ENCODE measurements at regions of chr10 and their contacts with region 1.

Region 1: GRCh38 chr10:128069351-128070051 is 56.7 kb downstream of the MKI67 start:
- DNase-seq: peak in 3 of 4 donors; percentile 68 to 88 (median 83)
- ATAC-seq: peak; percentile 80
- H3K4me3 ChIP-seq: no peak overlapping the region
- H3K27ac ChIP-seq: no peak overlapping the region
- H3K4me1 ChIP-seq: peaks cover 4 to 34% of the 10 kb centered on the region in 2 donors
- H3K27me3 ChIP-seq: no peaks in the 10 kb centered on the region
- CTCF ChIP-seq: peak; percentile 78 to 79

Region 2: GRCh38 chr10:127863231-127863825 is 206.2 kb before region 1 on chr10:
- intact Hi-C with region 1: loop called in 1 of 2 experiments (anchors 5 kb)
- DNase-seq: no peak
- ATAC-seq: no peak
- H3K4me3 ChIP-seq: no peak overlapping the region
- H3K27ac ChIP-seq: no peak overlapping the region
- H3K4me1 ChIP-seq: no peaks in the 10 kb centered on the region
- H3K27me3 ChIP-seq: no peaks in the 10 kb centered on the region
- CTCF ChIP-seq: no peak

Region 3: DNA sequence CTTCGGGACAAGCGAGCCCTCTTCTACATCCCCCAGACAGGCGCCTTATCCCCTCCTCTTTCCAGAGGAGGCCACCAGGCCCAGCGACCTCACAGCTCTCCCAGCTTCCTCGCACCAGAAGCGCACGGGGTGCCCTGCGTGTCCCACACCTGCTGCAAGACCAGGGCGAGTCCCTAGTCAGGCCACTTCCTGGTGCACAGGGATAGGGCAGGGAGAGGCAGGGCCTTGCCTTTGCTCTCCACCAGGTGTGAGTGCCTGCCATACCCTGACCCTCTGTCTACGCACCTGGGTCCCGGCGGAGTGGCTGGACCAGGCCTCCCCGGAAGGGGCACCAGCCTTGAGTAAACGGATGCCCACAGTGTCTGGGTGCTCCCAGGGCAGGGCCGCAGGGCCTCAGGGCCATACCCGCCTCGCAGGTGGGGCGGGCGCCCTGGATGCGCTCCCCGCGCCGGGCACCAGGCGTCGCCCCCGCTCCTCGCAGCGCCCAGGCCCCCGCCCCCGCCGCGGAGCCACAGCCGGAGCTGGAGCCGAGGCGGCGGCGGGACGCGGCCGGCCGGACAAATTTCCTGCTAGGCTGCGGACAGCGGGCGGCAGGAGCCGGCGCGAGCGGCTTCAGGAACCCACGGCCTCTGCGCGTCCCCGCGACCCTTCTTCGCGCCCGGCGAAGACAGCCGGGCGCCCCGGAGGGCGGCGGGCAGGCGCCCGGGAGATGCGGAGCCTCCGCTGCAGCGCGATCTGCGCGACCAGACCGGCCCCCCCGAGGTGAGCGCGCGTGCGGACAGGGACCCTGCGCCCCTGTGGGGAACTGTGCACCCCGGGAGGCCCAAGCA is 162.7 kb before region 1 on chr10 and contains the start of gene PTPRE:
- intact Hi-C with region 1: loop called in 1 of 2 experiments (anchors 2 kb)
- DNase-seq: peak; percentile 47 to 99 (median 71)
- ATAC-seq: peak; percentile 92
- H3K4me3 ChIP-seq: peak within 1 kb of the TSS; percentile 64 to 77
- H3K27ac ChIP-seq: peak within 1 kb of the TSS; percentile 89 to 91
- H3K4me1 ChIP-seq: peaks cover 10 to 48% of the 10 kb centered on the region in 2 donors
- H3K27me3 ChIP-seq: peaks cover 0 to 9% of the 10 kb centered on the region in 2 donors
- CTCF ChIP-seq: peak; percentile 85
- polyA plus RNA-seq, gene PTPRE: 6.8 to 12.0 (median 9.0) TPM

Region 4: DNA sequence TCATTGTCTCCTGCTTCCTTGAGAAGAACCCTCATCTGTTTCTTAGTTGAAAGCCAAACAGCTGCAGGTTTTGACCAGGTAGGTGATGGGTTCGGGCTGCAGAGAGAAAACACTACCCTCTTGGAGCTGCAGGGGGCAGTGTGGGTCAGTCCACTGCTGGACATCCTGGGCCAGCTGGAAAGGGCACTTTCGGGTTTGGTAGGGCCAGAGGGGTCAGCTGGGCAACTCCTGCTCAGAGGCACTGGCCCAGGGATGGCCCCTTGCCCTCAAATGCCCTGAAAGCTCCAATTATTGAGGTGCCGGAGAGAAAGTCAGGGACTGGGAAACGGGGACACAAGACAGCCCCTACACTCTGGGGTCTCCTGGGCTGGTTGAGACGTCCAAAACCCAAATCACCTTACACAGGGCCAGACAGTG is 33.9 kb before region 1 on chr10:
- intact Hi-C with region 1: loop called in 1 of 2 experiments (anchors 5 kb)
- DNase-seq: peak in 1 of 4 donors; percentile 51
- ATAC-seq: peak; percentile 86
- H3K4me3 ChIP-seq: no peak overlapping the region
- H3K27ac ChIP-seq: no peak overlapping the region
- H3K4me1 ChIP-seq: peaks cover 0 to 6% of the 10 kb centered on the region in 2 donors
- H3K27me3 ChIP-seq: no peaks in the 10 kb centered on the region
- CTCF ChIP-seq: peak; percentile 69 to 85

Region 5: DNA sequence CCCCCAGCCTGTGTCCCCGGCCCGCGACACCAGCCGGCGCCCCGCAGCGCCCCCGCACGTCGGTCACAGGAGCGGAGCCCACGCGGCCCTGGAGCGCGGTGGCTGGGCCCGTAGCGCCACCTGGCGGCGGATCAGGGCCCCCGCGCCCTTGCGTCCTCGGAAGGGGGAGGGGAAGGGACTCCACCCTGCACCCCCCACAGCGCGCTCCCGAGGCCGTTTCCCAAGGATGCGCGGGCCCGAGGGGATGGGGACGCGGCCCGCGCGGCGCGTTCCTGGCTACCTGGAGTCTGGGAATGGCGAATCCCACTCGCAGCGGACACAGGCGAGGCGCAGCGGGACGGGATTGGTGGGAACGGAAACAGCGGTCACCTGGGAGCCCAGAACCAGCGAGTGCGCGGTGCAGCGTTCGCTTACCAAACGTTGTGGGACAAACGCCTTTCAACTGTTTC is 80.6 kb after region 1 on chr10:
- intact Hi-C with region 1: loop called in 1 of 2 experiments (anchors 10 kb)
- DNase-seq: peak; percentile 45 to 94 (median 75)
- ATAC-seq: peak; percentile 100
- H3K4me3 ChIP-seq: peak overlapping the region; percentile 30 to 44
- H3K27ac ChIP-seq: no peak overlapping the region
- H3K4me1 ChIP-seq: peaks cover 0 to 8% of the 10 kb centered on the region in 2 donors
- H3K27me3 ChIP-seq: peaks cover 14 to 54% of the 10 kb centered on the region in 2 donors
- CTCF ChIP-seq: peak; percentile 75 to 89

Region 6: GRCh38 chr10:128254476-128254875 is 185.0 kb after region 1 on chr10:
- intact Hi-C with region 1: no loop called
- DNase-seq: no peak
- ATAC-seq: no peak
- H3K4me3 ChIP-seq: no peak overlapping the region
- H3K27ac ChIP-seq: no peak overlapping the region
- H3K4me1 ChIP-seq: peaks cover 0 to 7% of the 10 kb centered on the region in 2 donors
- H3K27me3 ChIP-seq: peaks cover 0 to 53% of the 10 kb centered on the region in 2 donors
- CTCF ChIP-seq: no peak

Measured in left lung (tissue), 14 donors.